ENCODE measurements at regions of chr11 and their contacts with region 1.

Region 1: DNA sequence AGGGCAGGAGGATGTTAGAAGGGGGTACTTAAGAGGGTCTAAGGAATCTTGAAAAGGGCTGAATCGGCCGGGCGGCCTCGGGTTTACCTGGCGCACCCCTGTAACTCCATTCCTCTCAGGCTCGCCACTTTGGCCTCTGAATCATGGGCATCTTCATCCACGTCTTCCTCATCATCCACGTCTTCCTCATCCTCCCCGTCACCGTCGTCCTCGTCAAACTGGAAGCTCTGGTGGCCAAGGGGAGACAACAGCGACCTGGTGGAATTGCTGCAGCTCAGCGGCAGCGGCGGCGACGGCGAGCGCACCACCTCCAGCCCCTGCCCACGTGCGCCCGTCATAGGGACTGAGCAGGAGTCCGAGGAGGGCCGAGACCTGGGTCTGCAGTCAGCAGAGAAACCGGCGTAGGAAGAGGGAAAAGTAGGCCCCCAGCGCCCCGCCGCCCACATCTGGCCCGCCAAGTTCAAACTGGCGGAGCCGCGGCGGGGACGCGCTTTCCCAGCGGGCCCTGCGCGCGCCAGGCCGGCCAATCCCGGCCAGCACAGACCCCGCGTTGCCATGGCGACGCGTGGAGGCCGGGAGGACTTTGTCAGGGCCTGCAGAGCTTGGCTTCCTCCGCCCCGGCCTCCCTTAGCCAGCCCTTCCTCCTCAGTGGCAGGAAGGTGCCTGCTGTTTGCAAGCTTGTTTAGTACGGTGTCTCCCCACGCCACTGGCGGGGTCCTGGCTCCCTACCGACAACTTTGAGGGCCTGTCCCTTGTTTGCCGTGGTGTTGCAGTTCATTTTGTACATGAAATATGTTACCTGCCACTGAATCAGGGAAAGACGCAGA is at the start of gene CCDC34:
- DNase-seq: peak; percentile 88
- H3K4me3 ChIP-seq: peak within 1 kb of the TSS; percentile 63 to 68
- H3K27ac ChIP-seq: peak within 1 kb of the TSS; percentile 47 to 67
- H3K4me1 ChIP-seq: no peaks in the 10 kb centered on the region
- H3K27me3 ChIP-seq: no peaks in the 10 kb centered on the region
- CTCF ChIP-seq: no peak
- POLR2A ChIP-seq: no peak
- total RNA-seq, gene CCDC34: 5.7 to 6.7 TPM

Region 2: DNA sequence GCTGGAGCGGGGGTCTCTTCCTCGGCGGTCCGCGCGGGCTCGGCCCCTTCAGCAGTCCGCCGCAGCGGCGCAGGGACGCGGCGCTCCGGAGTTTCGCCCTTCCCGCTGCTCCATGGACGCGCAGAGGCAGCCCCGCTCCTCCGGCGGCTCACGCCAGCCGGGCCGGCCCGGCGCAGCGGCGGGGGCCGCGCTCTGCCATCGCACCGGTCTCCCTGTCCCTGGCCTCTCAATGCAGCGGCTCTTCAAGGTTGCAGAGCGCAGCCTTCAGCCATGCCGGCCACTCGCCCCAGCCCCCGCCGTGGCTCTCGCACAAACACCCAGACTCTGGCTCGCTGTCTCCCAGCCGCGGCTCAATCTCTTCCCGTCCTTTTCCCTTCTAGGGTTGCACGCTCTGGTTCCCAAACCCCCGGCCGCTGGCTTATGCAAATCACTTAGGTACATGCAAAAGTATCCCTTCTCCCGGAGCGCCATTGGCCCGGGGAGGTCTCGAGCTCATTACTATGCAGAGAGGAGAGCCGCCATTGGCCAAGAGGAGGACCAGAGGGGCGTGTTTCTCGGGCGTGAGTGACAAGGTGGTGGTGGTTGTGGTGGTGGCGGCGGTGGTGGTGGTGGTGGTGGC is 109.5 kb after region 1 on chr11 and contains the start of gene LGR4:
- intact Hi-C with region 1: loop called (anchors 10 kb)
- DNase-seq: peak; percentile 98
- H3K4me3 ChIP-seq: peak within 1 kb of the TSS; percentile 85 to 96
- H3K27ac ChIP-seq: peak within 1 kb of the TSS; percentile 82 to 94
- H3K4me1 ChIP-seq: peaks cover 8% of the 10 kb centered on the region
- H3K27me3 ChIP-seq: no peaks in the 10 kb centered on the region
- CTCF ChIP-seq: no peak
- POLR2A ChIP-seq: peak; percentile 97
- total RNA-seq, gene LGR4: 49.2 to 97.2 TPM